Naive thymus-derived CD4-positive, alpha-beta T cell (primary cell): ENCODE measurements at regions of chr6 and their contacts with region 1.

Region 1: GRCh38 chr6:134174672-134175198 is 122.3 kb upstream of the SLC2A12 start:
- DNase-seq: peak; percentile 87 to 97 (median 93)
- ATAC-seq: peak; percentile 89
- H3K4me3 ChIP-seq: peak overlapping the region; percentile 71
- H3K4me3 Mint-ChIP-seq: peak overlapping the region; percentile 86 to 100 (median 98)
- H3K27ac ChIP-seq: peak overlapping the region; percentile 88
- H3K27ac Mint-ChIP-seq: peak overlapping the region; percentile 89 to 99 (median 97)
- H3K4me1 ChIP-seq: peaks cover 11 to 52% of the 10 kb centered on the region in 2 donors
- H3K4me1 Mint-ChIP-seq: peaks cover 48 to 78% (median 75%) of the 10 kb centered on the region in 7 donors
- H3K27me3 ChIP-seq: no peaks in the 10 kb centered on the region
- H3K27me3 Mint-ChIP-seq: no peaks in the 10 kb centered on the region

Region 2: GRCh38 chr6:132813173-132813856 is 1361.4 kb before region 1 on chr6:
- CTCF ChIA-PET with region 1: no interaction called
- POLR2A ChIA-PET with region 1: no interaction called
- intact Hi-C with region 1: loop called in 1 of 2 experiments (anchors 5 kb)
- DNase-seq: peak in 8 of 9 donors; percentile 31 to 71 (median 62)
- ATAC-seq: no peak
- H3K4me3 ChIP-seq: peak overlapping the region; percentile 90
- H3K4me3 Mint-ChIP-seq: peak overlapping the region; percentile 91 to 100 (median 98)
- H3K27ac ChIP-seq: peak overlapping the region; percentile 80
- H3K27ac Mint-ChIP-seq: peak overlapping the region; percentile 95 to 100 (median 98)
- H3K4me1 ChIP-seq: peaks cover 23 to 26% of the 10 kb centered on the region in 2 donors
- H3K4me1 Mint-ChIP-seq: peaks cover 29 to 54% (median 43%) of the 10 kb centered on the region in 7 donors
- H3K27me3 ChIP-seq: no peaks in the 10 kb centered on the region
- H3K27me3 Mint-ChIP-seq: peaks cover 0 to 30% (median 0%) of the 10 kb centered on the region in 5 donors

Region 3: DNA sequence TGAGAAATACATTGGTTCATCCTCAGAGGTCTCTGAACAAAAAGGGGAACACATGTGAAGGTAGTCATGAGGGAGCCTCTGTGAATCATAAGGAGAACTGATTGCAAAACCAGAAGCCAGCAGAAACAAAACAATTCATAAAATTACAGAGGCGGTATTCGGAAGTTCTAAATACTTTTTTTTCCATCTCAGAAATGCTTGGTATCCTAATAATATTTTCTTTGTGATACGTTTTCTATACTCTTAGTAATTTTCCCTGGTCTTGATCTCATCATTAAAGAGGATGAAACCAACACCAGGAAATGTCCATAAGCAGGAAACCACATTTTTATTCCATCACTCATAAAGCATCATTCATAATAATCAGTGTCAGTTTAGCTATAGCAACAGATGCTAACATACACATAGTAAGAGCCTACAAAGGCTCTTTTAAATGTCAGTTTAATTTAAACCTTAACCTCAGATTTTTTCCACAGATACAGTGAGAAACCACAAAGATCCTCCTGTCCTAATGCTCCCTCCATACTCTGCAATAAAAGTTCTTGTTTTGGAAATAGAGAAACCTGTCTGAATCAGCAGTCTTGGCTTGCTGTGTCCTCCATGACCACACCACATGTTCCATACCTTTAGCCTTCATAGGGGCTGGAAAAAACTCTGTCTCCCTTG is 113.9 kb after region 1 on chr6:
- CTCF ChIA-PET with region 1: no interaction called
- POLR2A ChIA-PET with region 1: no interaction called
- intact Hi-C with region 1: loop called in 1 of 2 experiments (anchors 1 kb)
- DNase-seq: peak in 4 of 9 donors; percentile 6 to 50 (median 28)
- ATAC-seq: peak; percentile 81
- H3K4me3 ChIP-seq: no peak overlapping the region
- H3K4me3 Mint-ChIP-seq: peak overlapping the region in 7 of 10 donors; percentile 7 to 74 (median 46)
- H3K27ac ChIP-seq: no peak overlapping the region
- H3K27ac Mint-ChIP-seq: peak overlapping the region in 8 of 9 donors; percentile 23 to 87 (median 70)
- H3K4me1 ChIP-seq: peaks cover 7 to 9% of the 10 kb centered on the region in 2 donors
- H3K4me1 Mint-ChIP-seq: peaks cover 14 to 41% (median 20%) of the 10 kb centered on the region in 7 donors
- H3K27me3 ChIP-seq: no peaks in the 10 kb centered on the region
- H3K27me3 Mint-ChIP-seq: no peaks in the 10 kb centered on the region

Region 4: GRCh38 chr6:134436281-134436815 is 261.6 kb after region 1 on chr6:
- CTCF ChIA-PET with region 1: no interaction called
- POLR2A ChIA-PET with region 1: no interaction called
- intact Hi-C with region 1: loop called in 1 of 2 experiments (anchors 1 kb)
- DNase-seq: peak in 1 of 9 donors; percentile 65
- ATAC-seq: peak; percentile 84
- H3K4me3 ChIP-seq: peak overlapping the region; percentile 14
- H3K4me3 Mint-ChIP-seq: peak overlapping the region in 2 of 10 donors; percentile 9 to 81
- H3K27ac ChIP-seq: no peak overlapping the region
- H3K27ac Mint-ChIP-seq: peak overlapping the region in 3 of 9 donors; percentile 6 to 94 (median 81)
- H3K4me1 ChIP-seq: no peaks in the 10 kb centered on the region
- H3K4me1 Mint-ChIP-seq: peaks cover 7 to 49% (median 21%) of the 10 kb centered on the region in 7 donors
- H3K27me3 ChIP-seq: no peaks in the 10 kb centered on the region
- H3K27me3 Mint-ChIP-seq: no peaks in the 10 kb centered on the region

Region 5: DNA sequence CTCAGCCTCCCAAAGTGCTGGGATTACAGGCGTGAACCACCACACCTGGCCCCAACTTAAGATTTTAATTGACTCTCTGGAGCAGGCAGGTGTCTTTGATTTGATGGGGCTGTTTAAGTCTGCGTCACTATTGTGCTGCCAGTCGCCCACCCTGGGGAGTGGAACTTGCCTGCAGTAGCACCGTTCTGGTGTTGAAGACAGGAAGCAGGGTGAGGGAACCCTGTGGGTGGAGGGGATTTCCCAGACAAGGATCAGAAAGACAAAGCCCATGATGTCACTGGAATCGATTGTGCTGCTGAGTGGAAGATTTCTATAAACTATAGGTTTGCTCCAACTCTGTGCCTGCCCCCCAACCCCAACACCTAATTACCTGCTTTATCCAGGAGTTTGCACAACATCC is 764.2 kb after region 1 on chr6:
- CTCF ChIA-PET with region 1: interaction called, 16 read pairs
- POLR2A ChIA-PET with region 1: interaction called, 7 read pairs
- intact Hi-C with region 1: loop called in 1 of 2 experiments (anchors 1 kb)
- DNase-seq: peak in 6 of 9 donors; percentile 27 to 84 (median 34)
- ATAC-seq: peak; percentile 91
- H3K4me3 ChIP-seq: no peak overlapping the region
- H3K4me3 Mint-ChIP-seq: peak overlapping the region in 2 of 10 donors; percentile 25 to 28
- H3K27ac ChIP-seq: no peak overlapping the region
- H3K27ac Mint-ChIP-seq: peak overlapping the region in 3 of 9 donors; percentile 36 to 83 (median 55)
- H3K4me1 ChIP-seq: peaks cover 0 to 6% of the 10 kb centered on the region in 2 donors
- H3K4me1 Mint-ChIP-seq: peaks cover 0 to 15% (median 10%) of the 10 kb centered on the region in 7 donors
- H3K27me3 ChIP-seq: no peaks in the 10 kb centered on the region
- H3K27me3 Mint-ChIP-seq: no peaks in the 10 kb centered on the region

Region 6: DNA sequence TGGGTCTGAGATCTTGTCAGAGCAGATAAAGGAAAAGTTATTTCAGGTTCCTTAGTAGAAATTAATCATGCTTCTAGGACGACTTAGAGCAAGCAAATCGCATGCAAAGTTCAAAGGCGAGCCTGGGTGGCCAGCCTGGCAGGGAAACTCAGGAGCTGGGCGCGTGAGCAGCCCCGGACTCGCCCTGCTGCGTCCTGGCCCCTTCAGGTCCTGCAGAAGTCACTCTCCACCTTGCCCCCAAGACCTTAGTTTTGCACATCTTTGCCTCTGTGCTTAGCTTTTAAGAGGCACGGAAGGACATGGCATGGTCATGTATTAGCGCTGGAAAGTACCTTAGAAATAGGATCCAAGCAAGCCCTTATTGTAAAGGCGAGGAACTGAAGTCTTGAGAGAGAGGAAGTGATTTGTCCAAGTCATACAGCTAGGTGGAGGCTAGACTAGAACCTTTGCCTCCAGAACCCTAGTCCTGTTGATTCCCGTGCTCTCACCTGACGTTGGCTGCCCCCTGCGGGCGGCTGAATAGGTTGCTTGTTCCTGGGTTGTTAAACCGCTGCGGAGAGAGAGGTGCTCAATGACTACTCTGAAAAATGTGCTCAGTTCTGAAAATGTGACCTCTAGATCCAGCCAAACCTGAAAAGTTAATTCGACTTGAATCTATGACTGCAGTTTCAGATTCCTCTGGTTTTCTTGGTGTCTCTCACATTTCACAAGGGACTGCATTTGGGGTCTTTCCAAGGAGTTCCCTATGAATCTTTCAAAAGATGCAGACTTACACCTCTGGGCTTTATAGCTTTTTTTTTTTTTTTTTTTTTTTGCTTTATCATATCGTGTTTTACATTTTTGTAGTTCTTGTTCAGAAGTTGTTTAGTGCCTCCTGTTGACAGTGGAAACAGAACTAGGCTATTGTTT is 1009.1 kb after region 1 on chr6:
- CTCF ChIA-PET with region 1: no interaction called
- POLR2A ChIA-PET with region 1: no interaction called
- intact Hi-C with region 1: loop called (anchors 2 kb)
- DNase-seq: peak; percentile 57 to 81 (median 76)
- ATAC-seq: peak; percentile 68
- H3K4me3 ChIP-seq: peak overlapping the region; percentile 56
- H3K4me3 Mint-ChIP-seq: peak overlapping the region; percentile 85 to 98 (median 90)
- H3K27ac ChIP-seq: peak overlapping the region; percentile 74
- H3K27ac Mint-ChIP-seq: peak overlapping the region; percentile 38 to 96 (median 86)
- H3K4me1 ChIP-seq: peaks cover 0 to 4% of the 10 kb centered on the region in 2 donors
- H3K4me1 Mint-ChIP-seq: peaks cover 16 to 42% (median 22%) of the 10 kb centered on the region in 7 donors
- H3K27me3 ChIP-seq: no peaks in the 10 kb centered on the region
- H3K27me3 Mint-ChIP-seq: no peaks in the 10 kb centered on the region

Region 7: DNA sequence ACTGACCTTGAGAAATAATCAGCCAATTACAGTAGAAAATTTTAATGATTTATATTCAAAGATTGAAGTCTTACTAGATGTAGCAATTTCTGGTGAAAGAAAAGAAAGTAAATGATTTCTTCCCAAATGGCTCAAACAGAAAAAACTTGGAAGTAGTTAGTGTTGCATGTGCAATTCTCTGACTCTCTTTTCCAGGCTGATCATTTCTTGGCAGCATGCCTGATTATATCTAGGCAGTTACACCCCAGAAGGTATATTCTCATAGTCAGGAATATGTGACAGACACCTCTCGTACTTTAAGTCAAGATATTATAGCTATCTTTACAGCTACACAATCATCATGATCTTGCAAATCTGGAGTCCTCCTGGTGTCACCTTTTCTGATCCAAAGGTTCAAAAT is 1799.7 kb after region 1 on chr6:
- CTCF ChIA-PET with region 1: no interaction called
- POLR2A ChIA-PET with region 1: no interaction called
- intact Hi-C with region 1: no loop called
- DNase-seq: no peak
- ATAC-seq: no peak
- H3K4me3 ChIP-seq: no peak overlapping the region
- H3K4me3 Mint-ChIP-seq: no peak overlapping the region
- H3K27ac ChIP-seq: no peak overlapping the region
- H3K27ac Mint-ChIP-seq: no peak overlapping the region
- H3K4me1 ChIP-seq: no peaks in the 10 kb centered on the region
- H3K4me1 Mint-ChIP-seq: no peaks in the 10 kb centered on the region
- H3K27me3 ChIP-seq: no peaks in the 10 kb centered on the region
- H3K27me3 Mint-ChIP-seq: peaks cover 0 to 6% (median 0%) of the 10 kb centered on the region in 5 donors